ENCODE measurements at regions of chr11 and their contacts with region 1.

Region 1: DNA sequence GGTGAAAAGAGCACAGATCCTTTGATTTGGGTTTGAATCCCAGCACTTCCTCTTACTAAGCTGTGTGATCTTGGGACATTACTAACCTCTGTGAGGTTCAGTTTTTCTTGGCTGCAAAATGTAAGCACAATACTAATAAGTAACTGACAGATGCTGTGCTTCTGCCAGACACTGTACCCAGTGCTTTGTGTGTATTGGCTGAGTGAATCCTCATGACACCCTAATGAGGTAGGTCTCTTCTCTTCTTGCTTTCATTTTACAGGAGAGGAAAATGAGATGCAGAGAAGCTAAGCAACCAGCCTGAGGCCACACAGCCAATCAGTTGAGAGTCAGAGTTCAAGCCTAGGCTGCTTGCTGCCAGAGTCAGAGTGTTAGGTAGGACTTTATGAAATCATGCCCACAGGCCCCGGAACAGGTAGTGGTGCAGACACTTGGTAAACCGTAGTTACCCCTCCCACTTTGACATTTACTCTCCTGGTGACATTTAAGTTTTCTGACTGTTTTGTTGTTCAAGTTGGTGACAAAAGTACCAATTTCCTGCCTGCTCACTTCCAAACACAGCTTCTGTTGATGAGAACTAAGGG is 21.2 kb downstream of the PTPRJ start:
- DNase-seq: peak; percentile 68 to 97 (median 78)
- ATAC-seq: peak; percentile 90
- H3K4me3 ChIP-seq: peak overlapping the region; percentile 24
- H3K4me3 Mint-ChIP-seq: peak overlapping the region; percentile 74
- H3K27ac ChIP-seq: peak overlapping the region; percentile 63 to 74
- H3K27ac Mint-ChIP-seq: peak overlapping the region; percentile 93
- H3K4me1 ChIP-seq: peaks cover 92% of the 10 kb centered on the region
- H3K4me1 Mint-ChIP-seq: peaks cover 91% of the 10 kb centered on the region
- H3K27me3 ChIP-seq: no peaks in the 10 kb centered on the region
- H3K27me3 Mint-ChIP-seq: no peaks in the 10 kb centered on the region
- CTCF ChIP-seq: no peak

Region 2: GRCh38 chr11:47642099-47642855 is 359.3 kb before region 1 on chr11 and contains the start of gene MTCH2:
- CTCF ChIA-PET with region 1: no interaction called
- POLR2A ChIA-PET with region 1: no interaction called
- intact Hi-C with region 1: loop called in 1 of 2 experiments (anchors 5 kb)
- DNase-seq: peak; percentile 91 to 99 (median 95)
- ATAC-seq: peak; percentile 92
- H3K4me3 ChIP-seq: peak within 1 kb of the TSS; percentile 96
- H3K4me3 Mint-ChIP-seq: peak within 1 kb of the TSS; percentile 90
- H3K27ac ChIP-seq: peak within 1 kb of the TSS; percentile 88 to 91
- H3K27ac Mint-ChIP-seq: peak within 1 kb of the TSS; percentile 89
- H3K4me1 ChIP-seq: peaks cover 28% of the 10 kb centered on the region
- H3K4me1 Mint-ChIP-seq: peaks cover 26% of the 10 kb centered on the region
- H3K27me3 ChIP-seq: no peaks in the 10 kb centered on the region
- H3K27me3 Mint-ChIP-seq: no peaks in the 10 kb centered on the region
- CTCF ChIP-seq: peak; percentile 6
- total RNA-seq, gene MTCH2: 11.8 to 12.7 TPM

Region 3: GRCh38 chr11:47932544-47932943 is 69.0 kb before region 1 on chr11:
- CTCF ChIA-PET with region 1: interaction called, 24 read pairs
- POLR2A ChIA-PET with region 1: interaction called, 7 read pairs
- intact Hi-C with region 1: loop called in 1 of 2 experiments (anchors 1 kb)
- DNase-seq: no peak
- ATAC-seq: no peak
- H3K4me3 ChIP-seq: no peak overlapping the region
- H3K4me3 Mint-ChIP-seq: no peak overlapping the region
- H3K27ac ChIP-seq: no peak overlapping the region
- H3K27ac Mint-ChIP-seq: no peak overlapping the region
- H3K4me1 ChIP-seq: peaks cover 12% of the 10 kb centered on the region
- H3K4me1 Mint-ChIP-seq: peaks cover 23% of the 10 kb centered on the region
- H3K27me3 ChIP-seq: no peaks in the 10 kb centered on the region
- H3K27me3 Mint-ChIP-seq: no peaks in the 10 kb centered on the region
- CTCF ChIP-seq: no peak

Region 4: DNA sequence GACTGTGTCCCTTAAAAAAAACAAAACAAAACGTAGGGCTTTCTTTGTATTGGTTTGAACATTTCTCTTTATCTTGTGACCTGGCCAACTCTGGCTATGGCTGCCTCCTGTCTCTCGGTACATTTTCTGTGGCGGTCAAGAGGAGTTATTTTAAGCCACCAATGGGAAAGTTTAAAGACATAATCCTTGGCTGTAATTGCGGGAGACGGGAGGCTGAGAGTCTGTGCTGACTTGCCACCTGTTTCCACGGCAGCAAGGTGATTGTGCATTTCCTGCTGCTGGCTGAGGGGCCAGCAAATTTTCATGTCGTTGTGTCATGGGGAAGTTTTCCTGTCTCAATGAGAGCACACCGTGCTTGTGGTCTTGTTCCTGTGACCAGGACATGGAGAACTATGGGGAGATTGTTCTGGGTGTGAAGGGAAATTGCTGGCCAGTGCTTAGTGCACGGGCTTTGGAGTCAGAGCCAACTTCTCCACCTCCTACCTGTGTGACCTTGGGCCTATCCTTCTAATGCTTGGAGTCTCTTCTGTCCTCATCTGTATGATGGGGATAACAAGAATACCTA is 10.2 kb before region 1 on chr11:
- CTCF ChIA-PET with region 1: no interaction called
- POLR2A ChIA-PET with region 1: interaction called, 7 read pairs
- intact Hi-C with region 1: loop called in 1 of 2 experiments (anchors 1 kb)
- DNase-seq: peak in 4 of 14 experiments; percentile 48 to 54 (median 52)
- ATAC-seq: peak; percentile 74
- H3K4me3 ChIP-seq: no peak overlapping the region
- H3K4me3 Mint-ChIP-seq: peak overlapping the region; percentile 46
- H3K27ac ChIP-seq: no peak overlapping the region
- H3K27ac Mint-ChIP-seq: peak overlapping the region; percentile 70
- H3K4me1 ChIP-seq: peaks cover 31% of the 10 kb centered on the region
- H3K4me1 Mint-ChIP-seq: peaks cover 68% of the 10 kb centered on the region
- H3K27me3 ChIP-seq: no peaks in the 10 kb centered on the region
- H3K27me3 Mint-ChIP-seq: no peaks in the 10 kb centered on the region
- CTCF ChIP-seq: no peak

Region 5: DNA sequence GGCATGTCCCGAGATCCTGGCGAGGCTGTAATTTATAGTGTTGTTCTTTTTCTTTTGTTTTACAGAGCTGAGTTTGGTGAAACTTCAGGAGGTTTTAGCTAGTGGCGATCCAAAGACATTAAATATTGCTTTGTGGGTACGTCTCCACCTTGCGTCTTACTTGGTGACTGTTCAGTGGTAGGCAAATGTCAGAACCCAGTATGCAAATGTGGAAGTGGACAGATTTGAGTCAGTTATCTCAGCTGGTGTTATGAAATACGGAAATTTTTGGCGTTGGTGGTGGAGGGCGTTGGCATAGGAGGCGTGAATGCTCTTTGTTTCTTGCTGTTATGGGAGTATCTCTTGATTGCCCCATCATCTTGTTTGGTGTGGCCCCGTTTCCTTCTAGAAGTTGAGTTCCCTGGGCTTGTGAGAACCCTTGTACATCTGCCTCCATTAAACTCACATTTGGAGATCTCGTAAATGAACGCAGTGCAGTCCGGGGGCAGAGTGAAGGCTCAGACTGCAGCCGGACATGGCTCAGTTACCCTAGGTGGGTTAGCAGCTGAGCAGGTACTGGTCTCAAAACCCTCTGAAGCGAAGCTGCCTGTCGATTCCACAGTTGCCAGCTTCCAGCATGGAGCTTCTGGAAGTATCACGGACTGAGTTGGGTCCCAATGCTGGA is 18.7 kb after region 1 on chr11:
- CTCF ChIA-PET with region 1: interaction called, 13 read pairs
- POLR2A ChIA-PET with region 1: interaction called, 19 read pairs
- intact Hi-C with region 1: loop called in 1 of 2 experiments (anchors 2 kb)
- DNase-seq: peak in 4 of 14 experiments; percentile 24 to 84 (median 75)
- ATAC-seq: peak; percentile 43
- H3K4me3 ChIP-seq: peak overlapping the region; percentile 6
- H3K4me3 Mint-ChIP-seq: peak overlapping the region; percentile 71
- H3K27ac ChIP-seq: peak overlapping the region; percentile 0 to 68
- H3K27ac Mint-ChIP-seq: peak overlapping the region; percentile 90
- H3K4me1 ChIP-seq: peaks cover 60% of the 10 kb centered on the region
- H3K4me1 Mint-ChIP-seq: peaks cover 74% of the 10 kb centered on the region
- H3K27me3 ChIP-seq: no peaks in the 10 kb centered on the region
- H3K27me3 Mint-ChIP-seq: no peaks in the 10 kb centered on the region
- CTCF ChIP-seq: no peak

Region 6: DNA sequence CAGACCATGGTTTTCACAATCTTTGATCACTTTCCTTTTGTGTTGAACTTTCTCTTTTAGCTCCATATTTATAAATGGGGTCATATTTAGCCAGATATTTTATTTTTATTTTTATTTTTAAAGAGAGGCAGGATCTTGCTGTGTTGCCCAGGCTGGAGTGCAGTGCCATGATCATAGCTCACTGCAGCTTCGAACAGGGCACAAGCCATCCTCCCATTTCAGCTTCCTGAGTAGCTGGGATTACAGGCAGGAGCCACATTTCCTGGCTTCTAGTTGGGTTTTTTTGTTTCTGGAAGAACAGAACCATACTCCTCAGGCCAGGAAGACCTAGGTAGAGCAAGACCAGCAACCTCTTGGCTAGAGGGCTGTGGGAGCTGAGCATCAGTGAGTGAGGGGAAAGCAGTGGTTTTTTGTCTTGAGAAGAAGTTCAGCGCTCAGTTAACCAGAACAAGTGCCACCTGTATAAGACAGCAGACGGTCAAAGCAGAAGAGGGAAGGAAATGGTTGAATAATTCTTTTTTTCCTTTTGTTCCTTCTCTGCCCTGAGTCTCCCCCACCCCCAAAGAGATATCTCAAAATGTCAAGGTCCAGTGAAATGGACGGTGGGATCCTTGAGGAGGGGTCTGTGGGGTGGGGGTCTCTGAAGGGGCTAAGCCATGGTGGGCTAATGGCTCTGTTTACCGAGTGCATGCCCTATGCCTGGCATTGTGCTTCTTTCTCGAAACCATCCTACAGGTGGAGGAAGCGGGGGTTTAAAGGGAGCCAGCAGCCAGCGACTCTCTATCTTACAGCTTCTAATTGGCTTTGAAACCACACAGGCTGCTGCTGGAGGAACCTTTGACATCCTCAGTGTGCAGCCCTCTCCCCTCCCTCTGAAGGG is 41.8 kb after region 1 on chr11:
- CTCF ChIA-PET with region 1: no interaction called
- POLR2A ChIA-PET with region 1: interaction called, 11 read pairs
- intact Hi-C with region 1: no loop called
- DNase-seq: peak in 2 of 14 experiments; percentile 7 to 50
- ATAC-seq: peak; percentile 77
- H3K4me3 ChIP-seq: no peak overlapping the region
- H3K4me3 Mint-ChIP-seq: peak overlapping the region; percentile 52
- H3K27ac ChIP-seq: no peak overlapping the region
- H3K27ac Mint-ChIP-seq: peak overlapping the region; percentile 84
- H3K4me1 ChIP-seq: peaks cover 29% of the 10 kb centered on the region
- H3K4me1 Mint-ChIP-seq: peaks cover 73% of the 10 kb centered on the region
- H3K27me3 ChIP-seq: no peaks in the 10 kb centered on the region
- H3K27me3 Mint-ChIP-seq: no peaks in the 10 kb centered on the region
- CTCF ChIP-seq: no peak

Region 7: DNA sequence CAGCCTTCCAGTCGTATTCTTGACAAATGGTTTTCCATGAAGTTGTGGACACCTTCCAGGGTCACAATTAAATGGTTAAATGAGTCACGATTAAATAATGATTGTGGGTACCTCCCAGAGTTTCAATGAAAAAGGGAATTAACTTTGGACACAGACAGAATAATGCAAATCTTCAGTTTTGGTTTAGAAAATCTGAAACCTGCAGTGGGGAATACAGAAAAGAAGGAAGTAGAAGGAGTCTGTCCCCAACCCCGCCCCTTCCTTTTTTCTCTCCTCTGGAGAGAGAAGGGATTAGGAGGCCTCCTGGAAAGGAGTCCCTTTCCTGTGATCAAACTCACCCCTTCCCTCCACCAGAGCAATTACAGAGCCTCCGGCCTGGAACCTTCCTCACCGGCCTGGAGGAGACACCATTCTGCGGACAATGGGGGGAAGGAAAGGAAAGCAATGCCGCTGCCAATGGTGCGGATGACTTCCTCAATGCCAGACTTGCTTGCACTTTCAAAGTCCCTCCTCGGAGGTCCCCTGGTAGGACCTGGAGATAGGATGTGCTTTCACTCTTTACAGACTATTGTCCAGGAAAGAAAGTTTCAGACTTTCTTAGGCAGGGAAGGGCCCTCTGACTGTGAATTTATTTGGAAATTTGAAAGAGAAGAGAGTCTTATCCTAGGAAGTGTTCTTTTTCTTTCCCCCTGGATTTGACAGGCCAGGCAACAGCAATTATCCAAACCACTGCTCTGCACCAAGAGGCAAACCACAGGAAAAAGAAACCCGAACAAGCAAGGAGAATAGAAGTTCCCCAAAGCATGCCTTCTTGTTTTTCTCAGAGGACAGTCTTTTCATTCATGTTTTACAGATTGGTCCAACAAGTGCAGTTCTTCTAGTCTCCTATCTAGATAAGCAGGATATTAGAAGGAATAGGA is 65.6 kb after region 1 on chr11:
- CTCF ChIA-PET with region 1: no interaction called
- POLR2A ChIA-PET with region 1: no interaction called
- intact Hi-C with region 1: no loop called
- DNase-seq: no peak
- ATAC-seq: no peak
- H3K4me3 ChIP-seq: no peak overlapping the region
- H3K4me3 Mint-ChIP-seq: no peak overlapping the region
- H3K27ac ChIP-seq: no peak overlapping the region
- H3K27ac Mint-ChIP-seq: no peak overlapping the region
- H3K4me1 ChIP-seq: peaks cover 15% of the 10 kb centered on the region
- H3K4me1 Mint-ChIP-seq: peaks cover 32% of the 10 kb centered on the region
- H3K27me3 ChIP-seq: no peaks in the 10 kb centered on the region
- H3K27me3 Mint-ChIP-seq: no peaks in the 10 kb centered on the region
- CTCF ChIP-seq: no peak